CD4-positive, alpha-beta memory T cell (primary cell): ENCODE measurements at regions of chr15 and their contacts with region 1.

Region 1: DNA sequence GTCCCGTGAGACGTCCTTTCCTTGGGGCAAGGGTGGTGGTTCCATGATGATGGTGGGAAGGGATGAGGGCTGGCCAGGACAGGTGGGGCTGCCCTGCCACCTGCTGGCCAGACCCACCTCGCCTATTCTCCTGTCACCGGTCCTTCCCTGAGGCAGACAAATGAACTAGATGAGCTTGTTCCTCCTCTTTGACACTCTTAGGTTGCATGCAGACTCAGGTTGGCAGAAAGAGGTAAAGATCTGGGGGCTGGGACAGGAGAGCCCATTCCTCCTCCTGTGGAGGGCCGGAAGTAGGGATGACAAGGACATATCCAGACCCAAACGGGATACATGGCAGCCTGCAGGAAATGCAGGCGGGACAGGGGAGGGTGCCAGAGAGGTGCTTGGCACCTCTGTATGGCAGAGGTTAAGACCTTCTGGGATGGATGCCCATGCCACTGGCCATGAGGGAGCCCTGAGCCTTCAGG is 38.6 kb downstream of the ACSBG1 start:
- DNase-seq: peak in 4 of 5 donors; percentile 33 to 56 (median 42)
- H3K4me3 ChIP-seq: no peak overlapping the region
- H3K4me3 Mint-ChIP-seq: no peak overlapping the region
- H3K27ac ChIP-seq: no peak overlapping the region
- H3K27ac Mint-ChIP-seq: peak overlapping the region in 1 of 7 donors; percentile 37
- H3K4me1 ChIP-seq: no peaks in the 10 kb centered on the region
- H3K4me1 Mint-ChIP-seq: no peaks in the 10 kb centered on the region
- H3K27me3 ChIP-seq: no peaks in the 10 kb centered on the region
- H3K27me3 Mint-ChIP-seq: no peaks in the 10 kb centered on the region

Region 2: GRCh38 chr15:77959432-77959879 is 236.3 kb before region 1 on chr15:
- CTCF ChIA-PET with region 1: interaction called, 18 read pairs
- POLR2A ChIA-PET with region 1: no interaction called
- intact Hi-C with region 1: loop called (anchors 1 kb)
- DNase-seq: peak; percentile 60 to 71 (median 67)
- H3K4me3 ChIP-seq: no peak overlapping the region
- H3K4me3 Mint-ChIP-seq: peak overlapping the region in 1 of 8 donors; percentile 56
- H3K27ac ChIP-seq: no peak overlapping the region
- H3K27ac Mint-ChIP-seq: no peak overlapping the region
- H3K4me1 ChIP-seq: no peaks in the 10 kb centered on the region
- H3K4me1 Mint-ChIP-seq: peaks cover 1 to 8% (median 6%) of the 10 kb centered on the region in 4 donors
- H3K27me3 ChIP-seq: no peaks in the 10 kb centered on the region
- H3K27me3 Mint-ChIP-seq: peaks cover 0 to 2% of the 10 kb centered on the region in 2 donors

Region 3: GRCh38 chr15:77966540-77967290 is 229.1 kb before region 1 on chr15:
- CTCF ChIA-PET with region 1: interaction called, 13 read pairs
- POLR2A ChIA-PET with region 1: no interaction called
- intact Hi-C with region 1: no loop called
- DNase-seq: peak in 4 of 5 donors; percentile 39 to 40 (median 39)
- H3K4me3 ChIP-seq: no peak overlapping the region
- H3K4me3 Mint-ChIP-seq: no peak overlapping the region
- H3K27ac ChIP-seq: no peak overlapping the region
- H3K27ac Mint-ChIP-seq: no peak overlapping the region
- H3K4me1 ChIP-seq: no peaks in the 10 kb centered on the region
- H3K4me1 Mint-ChIP-seq: peaks cover 0 to 4% (median 0%) of the 10 kb centered on the region in 4 donors
- H3K27me3 ChIP-seq: no peaks in the 10 kb centered on the region
- H3K27me3 Mint-ChIP-seq: no peaks in the 10 kb centered on the region

Region 4: DNA sequence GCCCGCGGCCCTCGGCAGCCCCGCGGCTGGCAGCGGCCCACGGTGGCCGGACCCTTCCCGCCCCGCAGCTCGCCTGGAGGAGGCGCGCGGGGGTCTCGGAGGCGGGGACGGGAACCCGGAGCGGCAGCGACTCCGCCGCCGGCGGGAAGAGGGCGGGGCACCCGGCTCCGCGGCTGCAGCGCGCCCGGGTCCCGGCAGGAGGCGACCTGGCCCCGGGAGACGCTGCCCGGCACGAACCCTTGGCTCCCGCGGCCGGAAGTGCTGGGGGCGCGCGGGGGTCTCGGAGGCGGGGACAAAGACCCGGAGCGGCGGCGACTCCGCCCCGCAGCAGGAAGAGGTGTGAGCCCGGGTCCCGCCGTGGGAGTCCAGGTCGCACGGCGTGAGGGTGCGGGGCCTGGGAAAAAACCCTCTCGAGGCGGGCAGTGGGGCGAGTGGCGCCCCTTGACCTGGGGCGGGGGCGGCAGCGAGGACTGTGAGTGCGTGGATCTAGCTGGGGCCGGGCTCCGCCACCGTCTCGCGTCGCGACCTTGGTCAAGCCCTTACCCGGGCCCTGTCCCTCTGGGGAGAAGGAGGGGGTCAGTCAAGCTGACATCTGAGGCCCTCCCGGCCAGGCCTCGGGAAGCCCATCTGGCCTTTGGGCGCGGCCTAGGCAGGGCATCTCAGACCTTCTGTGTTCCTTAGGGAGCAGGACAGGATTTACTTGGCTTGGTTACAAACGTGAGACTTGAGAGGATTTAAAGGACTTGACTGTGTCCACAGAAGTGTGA is 64.3 kb before region 1 on chr15 and contains the start of gene CIB2:
- CTCF ChIA-PET with region 1: interaction called, 74 read pairs
- POLR2A ChIA-PET with region 1: interaction called, 11 read pairs
- intact Hi-C with region 1: loop called (anchors 1 kb)
- DNase-seq: peak; percentile 72 to 82 (median 76)
- H3K4me3 ChIP-seq: peak within 1 kb of the TSS; percentile 81 to 88
- H3K4me3 Mint-ChIP-seq: peak within 1 kb of the TSS; percentile 79 to 93 (median 80)
- H3K27ac ChIP-seq: peak within 1 kb of the TSS; percentile 66
- H3K27ac Mint-ChIP-seq: peak within 1 kb of the TSS; percentile 79 to 95 (median 88)
- H3K4me1 ChIP-seq: peaks cover 12% of the 10 kb centered on the region
- H3K4me1 Mint-ChIP-seq: peaks cover 7 to 30% (median 20%) of the 10 kb centered on the region in 4 donors
- H3K27me3 ChIP-seq: no peaks in the 10 kb centered on the region
- H3K27me3 Mint-ChIP-seq: peaks cover 0 to 1% of the 10 kb centered on the region in 2 donors
- total RNA-seq, gene CIB2: 1.0 to 1.7 TPM

Region 5: GRCh38 chr15:78149068-78149804 is 46.5 kb before region 1 on chr15 and contains the start of gene IDH3A:
- CTCF ChIA-PET with region 1: interaction called, 10 read pairs
- POLR2A ChIA-PET with region 1: no interaction called
- intact Hi-C with region 1: no loop called
- DNase-seq: peak; percentile 98 to 99 (median 99)
- H3K4me3 ChIP-seq: peak within 1 kb of the TSS; percentile 63 to 68
- H3K4me3 Mint-ChIP-seq: peak within 1 kb of the TSS; percentile 92 to 99 (median 94)
- H3K27ac ChIP-seq: peak within 1 kb of the TSS; percentile 74
- H3K27ac Mint-ChIP-seq: peak within 1 kb of the TSS; percentile 91 to 96 (median 94)
- H3K4me1 ChIP-seq: peaks cover 26% of the 10 kb centered on the region
- H3K4me1 Mint-ChIP-seq: peaks cover 28 to 46% (median 38%) of the 10 kb centered on the region in 4 donors
- H3K27me3 ChIP-seq: no peaks in the 10 kb centered on the region
- H3K27me3 Mint-ChIP-seq: no peaks in the 10 kb centered on the region
- total RNA-seq, gene IDH3A: 45.1 to 46.8 TPM

Region 6: GRCh38 chr15:78177447-78177873 is 18.3 kb before region 1 on chr15:
- CTCF ChIA-PET with region 1: interaction called, 19 read pairs
- POLR2A ChIA-PET with region 1: no interaction called
- intact Hi-C with region 1: no loop called
- DNase-seq: peak in 2 of 5 donors; percentile 11 to 19
- H3K4me3 ChIP-seq: no peak overlapping the region
- H3K4me3 Mint-ChIP-seq: no peak overlapping the region
- H3K27ac ChIP-seq: no peak overlapping the region
- H3K27ac Mint-ChIP-seq: no peak overlapping the region
- H3K4me1 ChIP-seq: peaks cover 10% of the 10 kb centered on the region
- H3K4me1 Mint-ChIP-seq: peaks cover 10 to 25% (median 16%) of the 10 kb centered on the region in 4 donors
- H3K27me3 ChIP-seq: no peaks in the 10 kb centered on the region
- H3K27me3 Mint-ChIP-seq: no peaks in the 10 kb centered on the region

Region 7: GRCh38 chr15:78241007-78241406 is 45.2 kb after region 1 on chr15:
- CTCF ChIA-PET with region 1: interaction called, 38 read pairs
- POLR2A ChIA-PET with region 1: no interaction called
- intact Hi-C with region 1: loop called (anchors 1 kb)
- DNase-seq: peak; percentile 70 to 78 (median 73)
- H3K4me3 ChIP-seq: no peak overlapping the region
- H3K4me3 Mint-ChIP-seq: no peak overlapping the region
- H3K27ac ChIP-seq: no peak overlapping the region
- H3K27ac Mint-ChIP-seq: no peak overlapping the region
- H3K4me1 ChIP-seq: no peaks in the 10 kb centered on the region
- H3K4me1 Mint-ChIP-seq: peaks cover 0 to 2% (median 0%) of the 10 kb centered on the region in 4 donors
- H3K27me3 ChIP-seq: no peaks in the 10 kb centered on the region
- H3K27me3 Mint-ChIP-seq: peaks cover 3% of the 10 kb centered on the region in 2 donors

Region 8: GRCh38 chr15:78264304-78265136 is 68.8 kb after region 1 on chr15 and contains the start of gene DNAJA4:
- CTCF ChIA-PET with region 1: no interaction called
- POLR2A ChIA-PET with region 1: no interaction called
- intact Hi-C with region 1: no loop called
- DNase-seq: peak; percentile 67 to 76 (median 73)
- H3K4me3 ChIP-seq: peak within 1 kb of the TSS; percentile 55 to 58
- H3K4me3 Mint-ChIP-seq: peak within 1 kb of the TSS; percentile 88 to 94 (median 89)
- H3K27ac ChIP-seq: peak within 1 kb of the TSS; percentile 63
- H3K27ac Mint-ChIP-seq: peak within 1 kb of the TSS; percentile 87 to 96 (median 91)
- H3K4me1 ChIP-seq: peaks cover 22% of the 10 kb centered on the region
- H3K4me1 Mint-ChIP-seq: peaks cover 19 to 34% (median 22%) of the 10 kb centered on the region in 4 donors
- H3K27me3 ChIP-seq: no peaks in the 10 kb centered on the region
- H3K27me3 Mint-ChIP-seq: no peaks in the 10 kb centered on the region
- total RNA-seq, gene DNAJA4: 31.5 to 32.8 TPM